ENCODE measurements at regions of chr2 and their contacts with region 1.

Region 1: GRCh38 chr2:48343571-48344440 is 186.1 kb upstream of the STON1 start:
- DNase-seq: peak; percentile 11
- H3K4me3 Mint-ChIP-seq: peak overlapping the region; percentile 35
- H3K27ac Mint-ChIP-seq: peak overlapping the region; percentile 61
- H3K4me1 Mint-ChIP-seq: peaks cover 54% of the 10 kb centered on the region
- H3K27me3 Mint-ChIP-seq: no peaks in the 10 kb centered on the region

Region 2: DNA sequence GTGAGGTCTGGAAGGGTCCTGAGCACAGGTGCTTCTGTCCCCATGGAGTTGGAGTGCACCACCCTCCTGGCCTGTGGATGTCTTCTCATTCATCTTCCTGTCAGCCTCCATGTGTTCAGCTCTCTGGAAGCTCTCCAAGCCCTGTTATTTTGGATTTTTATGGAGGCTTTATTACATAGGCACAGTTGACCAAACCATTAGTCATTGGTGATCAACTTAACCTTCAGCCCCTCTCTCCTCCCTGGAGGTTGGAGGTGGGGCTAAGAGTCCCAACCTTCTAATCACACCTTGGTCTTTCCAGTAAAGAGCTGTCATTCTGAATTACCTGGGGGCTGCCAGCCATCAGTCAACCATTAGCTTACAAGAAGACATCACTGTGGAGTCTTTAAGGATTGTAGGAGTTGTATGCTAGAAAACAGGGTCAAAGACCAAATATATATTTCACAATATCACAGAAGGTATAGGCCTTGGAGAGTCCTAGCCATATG is 1420.7 kb before region 1 on chr2:
- intact Hi-C with region 1: no loop called
- DNase-seq: no peak
- H3K4me3 Mint-ChIP-seq: no peak overlapping the region
- H3K27ac Mint-ChIP-seq: no peak overlapping the region
- H3K4me1 Mint-ChIP-seq: peaks cover 27% of the 10 kb centered on the region
- H3K27me3 Mint-ChIP-seq: no peaks in the 10 kb centered on the region

Region 3: GRCh38 chr2:48114256-48114655 is 229.6 kb before region 1 on chr2:
- intact Hi-C with region 1: loop called (anchors 1 kb)
- DNase-seq: peak; percentile 55
- H3K4me3 Mint-ChIP-seq: no peak overlapping the region
- H3K27ac Mint-ChIP-seq: peak overlapping the region; percentile 5
- H3K4me1 Mint-ChIP-seq: peaks cover 31% of the 10 kb centered on the region
- H3K27me3 Mint-ChIP-seq: peaks cover 1% of the 10 kb centered on the region

Region 4: DNA sequence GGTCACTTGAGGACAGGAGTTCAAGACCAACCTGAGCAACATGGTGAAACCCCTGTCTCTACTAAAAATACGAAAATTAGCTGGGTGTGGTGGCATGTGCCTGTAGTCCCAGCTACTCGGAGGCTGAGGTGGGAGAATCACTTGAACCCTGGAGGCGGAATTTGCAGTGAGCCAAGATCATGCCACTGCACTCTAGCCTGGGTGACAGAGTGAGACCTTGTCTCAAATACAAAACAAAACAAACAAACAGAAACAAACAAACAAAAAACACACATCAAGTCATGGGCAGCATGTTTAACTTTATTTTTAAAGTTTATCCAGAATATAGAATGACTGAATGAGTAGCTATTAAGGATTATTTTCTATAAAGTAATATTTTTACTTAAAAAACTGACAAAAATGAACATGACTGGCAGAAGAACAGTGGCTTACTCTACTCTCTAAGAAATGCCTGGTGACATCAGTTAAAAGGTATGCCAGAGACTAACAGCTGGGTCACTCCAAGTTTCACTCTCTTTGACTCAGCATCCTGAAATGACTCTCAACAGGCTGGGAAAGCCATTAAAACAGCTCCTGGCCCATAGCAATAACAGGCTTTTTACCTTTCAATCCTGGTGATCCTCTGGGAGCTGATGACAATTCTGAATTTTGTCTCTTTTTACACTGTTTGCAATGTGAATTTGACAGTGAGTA is 95.4 kb before region 1 on chr2:
- intact Hi-C with region 1: loop called (anchors 1 kb)
- DNase-seq: no peak
- H3K4me3 Mint-ChIP-seq: no peak overlapping the region
- H3K27ac Mint-ChIP-seq: no peak overlapping the region
- H3K4me1 Mint-ChIP-seq: peaks cover 11% of the 10 kb centered on the region
- H3K27me3 Mint-ChIP-seq: peaks cover 2% of the 10 kb centered on the region

Region 5: DNA sequence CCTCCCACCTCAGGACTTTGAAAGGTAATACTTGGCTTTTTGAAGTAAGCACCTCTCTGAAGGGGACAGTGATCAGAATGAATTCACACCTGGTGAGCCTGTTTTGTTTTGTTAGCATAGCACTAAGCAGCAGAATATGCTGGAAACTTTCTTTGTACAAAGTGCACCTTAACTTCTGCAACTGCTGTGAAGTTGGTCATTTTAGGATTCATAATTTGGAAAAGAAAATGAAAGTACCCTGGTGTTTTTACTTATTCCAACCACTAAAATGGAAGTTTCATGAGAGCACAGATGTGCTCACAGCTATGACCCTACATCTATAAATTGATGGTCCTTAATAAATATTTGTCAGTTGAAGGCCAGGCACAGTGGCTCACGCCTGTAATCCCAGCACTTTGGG is 71.6 kb before region 1 on chr2:
- intact Hi-C with region 1: loop called (anchors 1 kb)
- DNase-seq: no peak
- H3K4me3 Mint-ChIP-seq: no peak overlapping the region
- H3K27ac Mint-ChIP-seq: no peak overlapping the region
- H3K4me1 Mint-ChIP-seq: peaks cover 13% of the 10 kb centered on the region
- H3K27me3 Mint-ChIP-seq: no peaks in the 10 kb centered on the region

Region 6: DNA sequence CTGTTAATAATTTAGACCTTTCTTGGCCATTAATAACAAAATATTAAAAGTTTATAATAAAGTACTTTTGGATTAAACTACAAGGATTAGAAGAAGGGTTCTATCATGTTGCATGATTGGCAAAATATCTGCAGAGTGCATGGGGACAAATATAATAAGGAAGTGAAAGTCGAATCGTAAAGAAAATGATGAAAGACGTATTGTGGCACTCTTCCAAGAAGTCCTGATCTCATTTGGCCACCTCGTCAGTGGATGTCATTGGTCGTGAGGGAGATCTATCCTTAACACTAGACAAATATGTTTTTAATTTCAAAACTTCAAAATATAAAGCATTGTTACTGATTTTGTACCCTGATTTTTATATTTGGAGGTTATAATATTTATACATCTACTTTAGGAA is 11.5 kb before region 1 on chr2:
- intact Hi-C with region 1: loop called (anchors 1 kb)
- DNase-seq: no peak
- H3K4me3 Mint-ChIP-seq: no peak overlapping the region
- H3K27ac Mint-ChIP-seq: no peak overlapping the region
- H3K4me1 Mint-ChIP-seq: peaks cover 33% of the 10 kb centered on the region
- H3K27me3 Mint-ChIP-seq: no peaks in the 10 kb centered on the region

Region 7: GRCh38 chr2:48356701-48357325 is 13.0 kb after region 1 on chr2:
- intact Hi-C with region 1: loop called (anchors 1 kb)
- DNase-seq: peak; percentile 9
- H3K4me3 Mint-ChIP-seq: peak overlapping the region; percentile 61
- H3K27ac Mint-ChIP-seq: peak overlapping the region; percentile 91
- H3K4me1 Mint-ChIP-seq: peaks cover 62% of the 10 kb centered on the region
- H3K27me3 Mint-ChIP-seq: no peaks in the 10 kb centered on the region

Region 8: DNA sequence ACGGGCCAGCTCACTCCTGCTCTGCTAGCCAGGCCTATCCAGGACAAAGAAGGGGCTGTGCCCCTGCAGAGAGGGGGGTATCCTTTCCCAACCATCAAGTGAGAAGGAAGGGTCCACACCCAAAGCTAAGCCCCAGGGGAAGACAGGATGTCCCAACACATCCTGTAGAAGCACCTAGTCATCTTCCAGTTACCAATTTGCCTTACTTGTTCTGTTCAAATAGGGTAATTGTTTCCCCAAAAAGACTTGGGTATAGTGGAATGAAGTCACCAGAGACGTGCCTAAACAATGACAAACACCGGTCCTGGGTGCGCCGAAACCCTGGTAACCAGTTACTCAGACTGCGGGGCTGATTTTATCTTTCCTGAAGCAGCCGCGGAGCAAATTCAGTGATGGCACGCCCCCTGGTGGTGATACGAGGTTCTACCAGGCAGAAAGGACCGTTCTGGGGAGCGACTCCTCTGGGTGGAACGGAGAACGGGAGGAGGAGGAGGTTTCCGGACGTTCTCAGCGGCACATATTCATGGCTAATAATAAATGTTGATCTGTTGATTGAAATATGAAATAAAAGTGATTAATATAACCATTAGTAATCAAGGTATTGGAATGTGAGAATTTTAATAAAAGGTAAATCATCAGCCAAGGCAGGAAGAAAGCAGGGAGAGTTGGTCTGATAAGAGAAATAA is 76.8 kb after region 1 on chr2:
- intact Hi-C with region 1: loop called (anchors 1 kb)
- DNase-seq: peak; percentile 88
- H3K4me3 Mint-ChIP-seq: no peak overlapping the region
- H3K27ac Mint-ChIP-seq: peak overlapping the region; percentile 72
- H3K4me1 Mint-ChIP-seq: peaks cover 52% of the 10 kb centered on the region
- H3K27me3 Mint-ChIP-seq: peaks cover 2% of the 10 kb centered on the region